Panc1 (cell line): ENCODE measurements at regions of chr5 and their contacts with region 1.

Region 1: GRCh38 chr5:102511666-102512065 is 12.9 kb upstream of the SLCO6A1 start:
- DNase-seq: no peak
- ATAC-seq: no peak
- H3K4me3 ChIP-seq: no peak overlapping the region
- H3K27ac ChIP-seq: no peak overlapping the region
- H3K4me1 ChIP-seq: no peaks in the 10 kb centered on the region
- H3K27me3 ChIP-seq: no peaks in the 10 kb centered on the region
- CTCF ChIP-seq: no peak

Region 2: DNA sequence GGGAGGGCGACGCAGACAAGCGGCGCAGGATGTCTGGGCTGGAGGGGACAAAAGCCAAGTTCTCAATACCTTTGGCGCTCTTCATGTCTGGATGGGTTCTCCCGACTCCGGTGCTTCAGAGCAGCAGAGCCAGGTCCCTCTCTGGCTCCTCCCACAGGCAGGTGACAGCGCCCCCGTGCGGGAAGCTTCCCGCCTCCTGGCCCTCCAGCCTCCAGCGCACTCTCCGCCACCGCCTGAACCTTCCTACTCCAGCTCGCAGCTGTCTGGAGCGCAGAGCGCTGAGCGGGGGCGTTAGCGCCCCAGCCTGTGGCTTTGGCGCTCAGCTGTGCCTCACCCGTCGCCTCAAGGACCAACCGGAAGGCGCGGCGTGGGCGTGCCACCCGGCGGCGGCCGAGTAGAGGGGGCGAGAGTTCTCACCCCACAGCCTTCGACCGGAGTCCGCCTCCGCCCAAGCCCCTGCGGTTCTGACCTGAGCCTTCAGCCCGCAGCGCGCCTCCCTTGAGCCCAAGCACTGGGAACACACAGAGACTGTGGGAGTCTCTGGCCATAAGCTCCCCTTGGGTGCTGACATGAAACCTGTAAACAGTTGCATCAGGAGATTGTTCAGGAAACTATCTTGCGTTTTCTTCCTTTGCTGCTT is 215.4 kb before region 1 on chr5 and contains the start of gene SLCO4C1:
- CTCF ChIA-PET with region 1: no interaction called
- POLR2A ChIA-PET with region 1: no interaction called
- in situ Hi-C with region 1: no loop called
- intact Hi-C with region 1: loop called (anchors 10 kb)
- DNase-seq: peak; percentile 28
- ATAC-seq: peak; percentile 99
- H3K4me3 ChIP-seq: peak within 1 kb of the TSS; percentile 51 to 65
- H3K27ac ChIP-seq: peak within 1 kb of the TSS; percentile 45; the same call in 1 of the 2 replicates
- H3K4me1 ChIP-seq: 0 out of 2 replicates have a peak, but pooled peaks cover 3% of the 10 kb centered on the region
- H3K27me3 ChIP-seq: no peaks in the 10 kb centered on the region
- CTCF ChIP-seq: peak; percentile 89
- total RNA-seq, gene SLCO4C1: 0.90 TPM